K562 (cell line): ENCODE measurements at regions of chr4 and their contacts with region 1.

Region 1: DNA sequence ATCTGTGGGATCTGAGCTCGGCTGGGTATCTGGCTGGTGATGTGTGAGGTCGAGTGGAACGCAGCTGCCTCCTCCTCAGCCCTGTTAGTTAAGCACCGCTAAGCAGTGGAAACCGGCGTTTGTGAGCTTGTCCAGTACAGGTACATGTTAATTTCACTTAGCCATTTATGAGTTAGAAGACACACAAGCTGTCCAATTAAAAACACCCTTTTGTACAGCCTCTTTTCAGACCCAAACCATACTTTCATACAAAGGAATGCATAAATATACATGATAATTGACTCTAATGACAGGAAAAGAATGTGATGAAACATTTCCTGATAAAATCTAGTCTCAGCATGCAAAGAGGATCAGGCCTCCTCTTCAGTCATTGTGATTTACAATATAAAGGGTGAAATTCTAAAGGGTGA is 163.6 kb upstream of the FAT1 start:
- DNase-seq: peak in 1 of 4 experiments; percentile 20
- ATAC-seq: peak; percentile 18; the same call in 1 of the 3 replicates
- H3K4me3 ChIP-seq: peak overlapping the region; percentile 64
- H3K27ac ChIP-seq: no peak overlapping the region
- H3K4me1 ChIP-seq: peaks cover 8 to 16% of the 10 kb centered on the region in 2 experiments; a peak in 3 of 5 replicates
- H3K27me3 ChIP-seq: no peaks in the 10 kb centered on the region
- CTCF ChIP-seq: no peak
- EP300 ChIP-seq: no peak
- POLR2A ChIP-seq: no peak
- RAD21 ChIP-seq: no peak

Region 2: GRCh38 chr4:186775902-186776301 is 111.4 kb before region 1 on chr4:
- CTCF ChIA-PET with region 1: no interaction called
- POLR2A ChIA-PET with region 1: no interaction called
- in situ Hi-C with region 1: no loop called
- intact Hi-C with region 1: loop called (anchors 5 kb)
- DNase-seq: no peak
- ATAC-seq: no peak
- H3K4me3 ChIP-seq: no peak overlapping the region
- H3K27ac ChIP-seq: no peak overlapping the region
- H3K4me1 ChIP-seq: no peaks in the 10 kb centered on the region; a peak in 1 of 5 replicates
- H3K27me3 ChIP-seq: no peaks in the 10 kb centered on the region; a peak in 1 of 5 replicates
- CTCF ChIP-seq: no peak
- EP300 ChIP-seq: no peak
- POLR2A ChIP-seq: no peak
- RAD21 ChIP-seq: no peak

Region 3: DNA sequence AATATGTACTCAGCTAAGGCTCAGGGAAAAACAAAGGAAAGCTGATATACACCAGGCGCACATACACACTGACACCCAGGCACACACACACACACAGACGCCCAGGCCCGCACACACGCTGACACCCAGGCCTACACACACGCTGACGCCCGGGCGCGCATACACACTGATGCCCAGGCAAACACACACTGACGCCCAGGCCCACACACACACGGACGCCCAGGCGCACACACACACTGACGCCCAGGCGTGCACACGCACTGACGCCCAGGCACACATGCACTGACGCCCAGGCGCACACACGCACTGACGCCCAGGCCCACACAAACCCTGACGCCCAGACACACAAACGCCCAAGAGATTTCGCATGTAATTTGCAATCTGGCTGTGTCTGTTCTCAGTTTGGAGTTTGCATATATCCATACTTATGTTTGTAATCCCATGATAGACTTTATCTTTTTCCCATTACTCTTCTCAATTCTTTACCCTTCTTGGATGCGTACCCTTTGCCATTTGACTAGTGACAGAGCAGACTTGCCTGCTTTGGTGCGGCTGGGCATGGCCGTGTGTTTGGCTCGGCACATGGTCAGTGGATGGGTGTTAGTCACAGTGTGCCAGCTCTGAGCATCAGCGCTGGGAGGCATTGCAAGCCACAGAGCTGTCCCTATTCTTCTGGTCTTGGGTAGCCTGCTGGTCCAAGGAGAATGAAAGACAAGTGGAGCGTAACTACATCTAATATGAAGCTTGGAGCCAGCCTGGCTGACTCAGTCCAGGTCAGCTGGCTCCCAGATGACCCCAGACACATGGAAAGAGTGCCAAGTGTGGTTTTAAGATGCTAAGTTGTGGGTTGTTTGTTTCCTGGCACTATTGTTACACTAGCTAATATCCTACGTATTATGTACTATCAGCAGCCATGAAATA is 475.9 kb after region 1 on chr4:
- CTCF ChIA-PET with region 1: no interaction called
- POLR2A ChIA-PET with region 1: no interaction called
- in situ Hi-C with region 1: no loop called
- intact Hi-C with region 1: no loop called
- DNase-seq: no peak
- ATAC-seq: no peak
- H3K4me3 ChIP-seq: no peak overlapping the region
- H3K27ac ChIP-seq: no peak overlapping the region
- H3K4me1 ChIP-seq: no peaks in the 10 kb centered on the region
- H3K27me3 ChIP-seq: no peaks in the 10 kb centered on the region
- CTCF ChIP-seq: no peak
- EP300 ChIP-seq: no peak
- POLR2A ChIP-seq: no peak
- RAD21 ChIP-seq: no peak